Endothelial cell of umbilical vein (primary cell): ENCODE measurements at regions of chr1 and their contacts with region 1.

Region 1: GRCh38 chr1:178031856-178032320 is 62.0 kb upstream of the RASAL2 start:
- DNase-seq: peak; percentile 84
- H3K4me3 ChIP-seq: no peak overlapping the region
- H3K27ac ChIP-seq: no peak overlapping the region
- H3K4me1 ChIP-seq: peaks cover 7% of the 10 kb centered on the region
- H3K27me3 ChIP-seq: no peaks in the 10 kb centered on the region
- CTCF ChIP-seq: peak; percentile 80 to 84
- POLR2A ChIP-seq: no peak

Region 2: DNA sequence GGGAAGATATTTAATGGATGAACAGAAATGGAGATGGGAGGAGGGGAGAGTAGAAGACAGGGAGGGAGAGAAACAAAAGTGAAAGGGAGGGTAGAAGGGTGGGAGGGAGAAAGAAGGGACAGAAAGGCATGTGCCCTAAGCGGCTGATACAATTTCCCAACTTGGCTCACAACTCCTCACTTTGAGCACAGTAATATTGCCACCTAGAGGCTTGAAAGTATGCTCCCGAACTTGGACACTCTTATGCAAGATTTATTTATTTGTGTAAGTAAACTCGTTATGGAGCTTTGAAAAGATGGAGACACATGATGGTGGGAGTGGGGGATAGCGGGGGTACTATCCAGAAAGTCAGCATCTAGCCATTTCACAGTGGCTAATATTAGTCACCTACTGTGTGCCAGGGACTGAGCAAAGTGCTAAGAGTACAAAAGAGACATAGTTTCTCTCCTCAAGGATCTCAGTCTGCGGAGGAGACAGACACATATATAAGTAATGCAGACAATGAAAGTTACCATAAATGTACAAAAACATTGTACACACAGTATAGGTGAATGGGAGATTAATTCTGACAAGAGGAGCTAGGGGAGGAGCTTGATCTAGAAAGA is 251.7 kb before region 1 on chr1:
- CTCF ChIA-PET with region 1: no interaction called
- POLR2A ChIA-PET with region 1: no interaction called
- dilution Hi-C with region 1: no loop called
- intact Hi-C with region 1: no loop called
- DNase-seq: peak; percentile 45
- H3K4me3 ChIP-seq: no peak overlapping the region
- H3K27ac ChIP-seq: no peak overlapping the region
- H3K4me1 ChIP-seq: peaks cover 4% of the 10 kb centered on the region
- H3K27me3 ChIP-seq: no peaks in the 10 kb centered on the region
- CTCF ChIP-seq: peak in 1 of 2 donors; percentile 19
- POLR2A ChIP-seq: no peak

Region 3: GRCh38 chr1:178046591-178047270 is 14.8 kb after region 1 on chr1:
- CTCF ChIA-PET with region 1: interaction called, 43 read pairs
- POLR2A ChIA-PET with region 1: no interaction called
- dilution Hi-C with region 1: no loop called
- intact Hi-C with region 1: no loop called
- DNase-seq: no peak
- H3K4me3 ChIP-seq: no peak overlapping the region
- H3K27ac ChIP-seq: no peak overlapping the region
- H3K4me1 ChIP-seq: peaks cover 14% of the 10 kb centered on the region
- H3K27me3 ChIP-seq: no peaks in the 10 kb centered on the region
- CTCF ChIP-seq: no peak
- POLR2A ChIP-seq: no peak

Region 4: DNA sequence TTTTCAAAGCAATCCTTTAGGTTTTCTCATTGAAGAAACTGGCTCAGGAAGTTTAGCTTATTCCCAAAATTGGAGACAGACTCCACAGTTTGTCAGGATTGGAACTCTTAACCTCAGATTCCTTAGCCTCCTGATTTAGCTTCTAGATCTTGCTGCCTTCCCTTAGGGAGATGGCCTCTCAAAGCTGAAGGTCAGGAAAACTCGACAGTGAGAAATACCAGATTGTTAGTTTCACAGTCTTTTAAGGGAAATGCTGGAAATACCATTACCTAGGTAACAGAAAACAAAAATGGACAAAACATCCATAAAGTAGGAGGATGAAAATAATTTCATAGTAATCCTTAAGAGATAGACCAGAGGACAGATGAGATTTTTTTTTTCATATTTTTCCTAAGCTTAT is 69.8 kb after region 1 on chr1:
- CTCF ChIA-PET with region 1: interaction called, 11 read pairs
- POLR2A ChIA-PET with region 1: no interaction called
- dilution Hi-C with region 1: no loop called
- intact Hi-C with region 1: no loop called
- DNase-seq: peak; percentile 73
- H3K4me3 ChIP-seq: no peak overlapping the region
- H3K27ac ChIP-seq: no peak overlapping the region
- H3K4me1 ChIP-seq: peaks cover 4% of the 10 kb centered on the region
- H3K27me3 ChIP-seq: no peaks in the 10 kb centered on the region
- CTCF ChIP-seq: no peak
- POLR2A ChIP-seq: no peak

Region 5: GRCh38 chr1:178238722-178239510 is 207.0 kb after region 1 on chr1:
- CTCF ChIA-PET with region 1: interaction called, 14 read pairs
- POLR2A ChIA-PET with region 1: no interaction called
- dilution Hi-C with region 1: no loop called
- intact Hi-C with region 1: no loop called
- DNase-seq: peak; percentile 72
- H3K4me3 ChIP-seq: no peak overlapping the region
- H3K27ac ChIP-seq: peak overlapping the region; percentile 53
- H3K4me1 ChIP-seq: peaks cover 36% of the 10 kb centered on the region
- H3K27me3 ChIP-seq: no peaks in the 10 kb centered on the region
- CTCF ChIP-seq: no peak
- POLR2A ChIP-seq: no peak

Region 6: GRCh38 chr1:178282949-178283367 is 251.1 kb after region 1 on chr1:
- CTCF ChIA-PET with region 1: interaction called, 252 read pairs
- POLR2A ChIA-PET with region 1: no interaction called
- dilution Hi-C with region 1: no loop called
- intact Hi-C with region 1: loop called (anchors 1 kb)
- DNase-seq: peak; percentile 69
- H3K4me3 ChIP-seq: no peak overlapping the region
- H3K27ac ChIP-seq: no peak overlapping the region
- H3K4me1 ChIP-seq: no peaks in the 10 kb centered on the region
- H3K27me3 ChIP-seq: no peaks in the 10 kb centered on the region
- CTCF ChIP-seq: peak; percentile 28 to 34
- POLR2A ChIP-seq: no peak